Calu3 (cell line): ENCODE measurements at regions of chr9 and their contacts with region 1.

Region 1: DNA sequence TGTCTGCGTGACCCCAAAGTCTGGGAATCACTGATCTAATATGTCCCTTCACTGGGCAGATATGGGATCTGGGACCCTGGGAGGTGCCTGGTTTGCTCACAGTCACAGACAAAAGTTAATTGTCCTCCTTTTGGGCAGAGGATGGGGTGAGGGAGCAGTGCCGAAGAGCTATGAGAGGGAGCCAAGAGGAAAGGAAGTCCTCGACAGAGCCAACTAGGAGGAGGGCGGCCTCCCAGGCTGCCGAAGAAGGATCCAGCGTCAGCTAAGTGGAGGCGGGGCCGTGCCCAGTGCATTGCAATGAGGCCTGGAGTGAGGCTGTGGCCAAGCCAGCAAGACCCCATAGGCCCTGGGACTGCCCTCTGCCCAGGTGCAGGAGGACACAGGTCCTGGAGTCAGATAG is 11.4 kb downstream of the AIF1L start:
- DNase-seq: no peak
- H3K4me3 Mint-ChIP-seq: no peak overlapping the region
- H3K27ac Mint-ChIP-seq: no peak overlapping the region
- H3K4me1 Mint-ChIP-seq: no peaks in the 10 kb centered on the region
- H3K27me3 Mint-ChIP-seq: no peaks in the 10 kb centered on the region
- CTCF ChIP-seq: no peak

Region 2: GRCh38 chr9:130770679-130771442 is 336.9 kb before region 1 on chr9:
- CTCF ChIA-PET with region 1: interaction called, 15 read pairs
- intact Hi-C with region 1: no loop called
- DNase-seq: peak; percentile 11
- H3K4me3 Mint-ChIP-seq: no peak overlapping the region
- H3K27ac Mint-ChIP-seq: no peak overlapping the region
- H3K4me1 Mint-ChIP-seq: peaks cover 22% of the 10 kb centered on the region
- H3K27me3 Mint-ChIP-seq: no peaks in the 10 kb centered on the region
- CTCF ChIP-seq: peak; percentile 28